ENCODE measurements at regions of chr21 and their contacts with region 1.

Region 1: GRCh38 chr21:36135391-36136102 is 668 bp downstream of the CBR3 start:
- DNase-seq: peak; percentile 81 to 82
- ATAC-seq: peak; percentile 93
- H3K4me3 ChIP-seq: peak overlapping the region; percentile 43 to 70
- H3K27ac ChIP-seq: peak overlapping the region; percentile 44 to 74
- H3K4me1 ChIP-seq: no peaks in the 10 kb centered on the region
- H3K27me3 ChIP-seq: no peaks in the 10 kb centered on the region

Region 2: DNA sequence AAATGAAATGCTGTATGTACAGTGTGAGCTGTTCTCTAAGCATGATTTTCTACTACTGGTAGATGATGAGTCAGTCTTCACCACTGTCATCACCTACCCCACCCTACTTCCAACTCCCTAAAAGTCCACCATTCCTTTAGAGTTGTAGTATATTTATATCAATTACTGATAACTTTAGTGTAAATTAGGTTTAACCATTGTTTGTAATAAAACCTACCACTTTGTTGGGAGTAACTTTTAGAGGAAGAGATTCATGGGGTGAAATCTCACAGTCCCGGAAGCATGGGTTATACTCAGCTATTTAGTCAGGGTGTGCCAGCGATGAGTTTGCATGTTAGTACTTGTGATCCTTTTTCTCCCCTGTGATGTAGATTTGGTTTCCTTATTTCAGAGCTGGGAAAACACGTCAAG is 201.6 kb after region 1 on chr21:
- intact Hi-C with region 1: loop called in 1 of 2 experiments (anchors 5 kb)
- DNase-seq: no peak
- ATAC-seq: no peak
- H3K4me3 ChIP-seq: no peak overlapping the region
- H3K27ac ChIP-seq: no peak overlapping the region
- H3K4me1 ChIP-seq: no peaks in the 10 kb centered on the region
- H3K27me3 ChIP-seq: no peaks in the 10 kb centered on the region